A549 (cell line): ENCODE measurements at regions of chr7 and their contacts with region 1.

Region 1: DNA sequence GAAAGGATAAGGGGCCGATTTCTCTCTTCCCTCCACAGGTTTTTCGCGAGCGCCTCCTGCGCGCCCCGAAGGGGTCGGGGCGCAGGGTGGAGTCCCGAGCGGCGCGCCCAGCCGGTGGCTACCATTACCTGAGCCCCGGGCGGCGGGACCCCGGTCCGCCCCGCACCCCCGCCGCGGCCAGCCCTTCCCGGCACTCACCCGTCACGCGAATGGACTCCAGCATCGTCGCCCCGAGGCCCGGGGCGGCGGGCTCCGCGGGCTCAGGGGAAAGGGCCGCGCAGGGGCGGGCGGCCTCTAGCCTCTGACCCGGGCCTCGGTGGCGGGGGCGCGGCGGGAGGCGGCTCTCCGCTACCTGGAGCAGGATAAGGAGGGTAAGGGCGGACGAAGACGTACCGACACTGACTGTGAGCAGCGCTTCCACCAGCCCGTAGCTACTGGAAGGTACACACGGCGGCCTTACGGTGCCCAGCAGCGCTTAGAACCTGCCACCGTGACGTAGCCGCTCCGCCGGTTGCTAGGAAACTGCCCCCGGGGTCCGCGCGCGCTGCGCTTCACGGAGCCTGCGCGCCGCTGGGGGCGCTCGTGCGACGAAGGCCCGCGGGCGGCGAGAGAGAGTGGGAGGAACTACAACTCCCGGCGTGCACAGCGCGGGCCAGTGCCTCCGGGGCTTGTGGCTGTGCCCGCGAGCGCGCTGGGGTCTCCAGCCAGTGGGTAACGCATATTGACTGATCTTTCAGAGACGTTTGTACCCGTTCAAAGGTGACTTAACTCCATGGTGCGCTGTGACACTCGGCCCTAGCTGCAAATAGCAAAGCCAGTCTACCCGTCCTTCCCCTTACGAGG is 22.7 kb upstream of the ANLN start:
- DNase-seq: peak; percentile 90 to 91
- ATAC-seq: peak; percentile 97 to 99
- H3K4me3 ChIP-seq: peak overlapping the region; percentile 92
- H3K27ac ChIP-seq: peak overlapping the region; percentile 88 to 94
- H3K4me1 ChIP-seq: peaks cover 8% of the 10 kb centered on the region; the same call in 2 of the 3 replicates
- CTCF ChIP-seq: peak; percentile 81
- EP300 ChIP-seq: no peak
- POLR2A ChIP-seq: peak; percentile 43
- RAD21 ChIP-seq: peak; percentile 52 to 62

Region 2: DNA sequence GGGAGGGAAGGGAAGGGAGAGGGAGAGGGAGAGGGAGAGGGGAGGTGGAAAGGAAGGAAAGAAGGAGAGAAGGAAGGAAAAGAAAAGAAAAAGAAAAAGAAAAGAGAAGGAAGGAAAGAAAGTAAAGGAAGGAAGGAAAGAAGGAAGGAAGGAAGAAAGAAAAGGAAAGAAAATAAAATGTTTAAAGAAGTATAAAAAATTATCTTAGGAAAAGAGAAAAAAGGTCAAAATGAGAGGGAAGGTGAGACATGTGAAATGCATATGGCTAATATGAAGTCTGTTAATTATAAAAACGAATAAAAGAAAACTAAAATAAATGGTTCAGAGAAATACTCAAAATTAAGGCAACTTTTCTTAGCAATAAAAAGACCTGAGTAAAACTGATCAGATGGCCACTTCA is 23.4 kb before region 1 on chr7:
- CTCF ChIA-PET with region 1: interaction called, 10 read pairs
- POLR2A ChIA-PET with region 1: no interaction called
- DNase-seq: no peak
- ATAC-seq: no peak
- H3K4me3 ChIP-seq: no peak overlapping the region
- H3K27ac ChIP-seq: no peak overlapping the region
- H3K4me1 ChIP-seq: peaks cover 14% of the 10 kb centered on the region; the same call in 2 of the 3 replicates
- CTCF ChIP-seq: no peak
- EP300 ChIP-seq: no peak
- POLR2A ChIP-seq: no peak
- RAD21 ChIP-seq: no peak

Region 3: GRCh38 chr7:36389371-36390198 is 22.6 kb after region 1 on chr7 and contains the start of gene ANLN:
- CTCF ChIA-PET with region 1: interaction called, 23 read pairs
- POLR2A ChIA-PET with region 1: interaction called, 9 read pairs
- DNase-seq: peak; percentile 93 to 95
- ATAC-seq: peak; percentile 84 to 86
- H3K4me3 ChIP-seq: peak within 1 kb of the TSS; percentile 67
- H3K27ac ChIP-seq: peak within 1 kb of the TSS; percentile 88 to 94
- H3K4me1 ChIP-seq: peaks cover 46% of the 10 kb centered on the region
- CTCF ChIP-seq: no peak
- EP300 ChIP-seq: no peak
- POLR2A ChIP-seq: peak; percentile 41
- RAD21 ChIP-seq: no peak
- polyA plus RNA-seq, gene ANLN: 52.4 and 148 TPM in 2 replicates